Prostate gland (tissue), 2 donors: ENCODE measurements at regions of chr11 and their contacts with region 1.

Region 1: DNA sequence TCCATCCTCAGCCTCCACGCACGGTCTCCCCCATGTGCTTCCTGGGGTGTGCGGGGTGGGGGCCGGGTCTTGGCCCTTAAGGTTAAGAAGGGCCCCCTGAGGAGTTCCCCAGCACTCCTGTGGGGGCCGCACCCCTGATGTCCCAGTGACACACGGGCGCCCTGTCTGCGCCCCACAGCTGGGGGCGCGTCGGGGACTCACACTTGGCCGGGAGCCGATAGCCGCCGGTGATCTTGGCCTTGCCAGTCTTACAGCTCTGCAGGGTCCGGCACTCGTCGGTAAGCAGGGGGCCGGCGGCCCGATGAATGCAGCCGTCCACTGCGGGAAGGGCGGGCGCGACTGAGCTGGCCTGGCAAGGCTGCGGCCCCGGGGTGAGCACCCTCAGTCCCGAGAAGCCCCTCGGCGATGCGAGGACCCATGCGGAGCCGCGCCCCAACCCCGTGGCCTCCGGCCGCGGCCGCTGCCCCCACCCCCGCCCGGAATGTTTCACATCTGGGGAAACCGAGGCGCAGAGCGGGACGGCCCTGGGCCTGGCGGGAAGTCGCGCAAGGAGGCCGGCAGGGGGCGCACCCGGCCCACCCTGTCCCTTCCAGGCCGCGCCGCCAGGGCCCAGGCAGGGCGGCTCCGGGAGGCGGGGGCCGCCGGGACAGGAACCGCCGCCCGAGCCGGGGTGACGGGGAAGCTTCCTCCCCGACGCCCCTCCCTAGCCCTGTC is 13.9 kb downstream of the OTUB1 start:
- DNase-seq: peak; percentile 55
- H3K4me3 ChIP-seq: peak overlapping the region; percentile 20 to 24
- H3K27ac ChIP-seq: peak overlapping the region in 1 of 2 donors; percentile 31
- H3K4me1 ChIP-seq: peaks cover 22% of the 10 kb centered on the region
- H3K27me3 ChIP-seq: no peaks in the 10 kb centered on the region
- CTCF ChIP-seq: peak; percentile 79 to 98 (median 90)
- POLR2A ChIP-seq: no peak

Region 2: GRCh38 chr11:64152841-64153691 is 152.9 kb after region 1 on chr11:
- intact Hi-C with region 1: loop called (anchors 2 kb)
- DNase-seq: peak; percentile 52
- H3K4me3 ChIP-seq: no peak overlapping the region
- H3K27ac ChIP-seq: no peak overlapping the region
- H3K4me1 ChIP-seq: peaks cover 5% of the 10 kb centered on the region
- H3K27me3 ChIP-seq: no peaks in the 10 kb centered on the region
- CTCF ChIP-seq: peak; percentile 94 to 99 (median 97)
- POLR2A ChIP-seq: no peak

Region 3: DNA sequence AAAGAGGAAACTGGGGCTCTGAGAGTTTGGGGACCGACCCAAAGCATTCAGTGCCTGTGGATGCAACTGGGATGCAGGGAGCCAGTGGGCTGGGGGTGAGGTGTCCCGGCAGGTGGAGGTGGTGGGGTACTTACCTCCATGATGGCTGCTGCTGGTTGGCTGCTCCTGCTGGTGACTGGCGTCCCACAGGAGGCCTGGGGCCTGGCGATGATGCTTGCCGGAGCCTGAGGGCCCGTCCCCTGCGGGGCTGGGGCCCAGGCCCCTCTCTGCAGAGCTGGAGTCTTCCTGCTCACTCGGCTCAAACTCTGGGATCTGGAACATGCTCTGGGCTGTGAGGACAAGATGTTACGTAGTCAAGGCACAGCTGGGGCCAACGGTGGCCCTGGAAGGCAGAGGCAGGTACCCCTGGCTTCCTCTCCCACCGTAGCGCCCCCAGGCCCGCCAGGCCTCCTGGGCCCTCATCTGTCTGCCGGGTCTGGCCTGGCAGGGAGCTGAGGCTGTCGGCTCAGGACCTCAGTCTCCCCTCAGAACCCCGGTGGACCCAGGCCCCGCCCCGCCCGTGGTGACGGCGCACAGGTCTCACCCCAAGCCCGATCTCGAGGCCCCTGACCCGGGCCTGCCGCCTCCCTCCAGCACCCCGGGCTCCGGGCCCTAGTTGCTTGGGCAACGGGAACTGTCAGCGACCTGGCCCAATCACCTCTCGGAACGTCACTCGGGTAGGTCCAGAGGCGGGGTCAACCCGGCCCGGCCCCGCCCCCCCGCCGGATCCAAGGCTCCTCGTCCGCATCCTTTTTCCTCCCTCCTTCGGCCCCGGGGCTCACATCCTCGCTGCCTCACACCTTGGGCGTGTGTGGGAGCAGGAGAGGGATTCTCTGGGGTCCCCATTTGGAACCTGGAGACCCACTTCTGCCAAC is 284.1 kb after region 1 on chr11 and contains the start of gene BAD:
- intact Hi-C with region 1: no loop called
- DNase-seq: peak; percentile 97
- H3K4me3 ChIP-seq: peak within 1 kb of the TSS; percentile 71 to 80
- H3K27ac ChIP-seq: peak within 1 kb of the TSS; percentile 97 to 98
- H3K4me1 ChIP-seq: peaks cover 7% of the 10 kb centered on the region
- H3K27me3 ChIP-seq: no peaks in the 10 kb centered on the region
- CTCF ChIP-seq: no peak
- POLR2A ChIP-seq: peak; percentile 74
- total RNA-seq, gene BAD: 140 to 161 TPM

Region 4: GRCh38 chr11:64305075-64305690 is 305.0 kb after region 1 on chr11 and contains the start of gene ESRRA:
- intact Hi-C with region 1: no loop called
- DNase-seq: peak; percentile 100
- H3K4me3 ChIP-seq: peak within 1 kb of the TSS; percentile 53 to 69
- H3K27ac ChIP-seq: peak within 1 kb of the TSS; percentile 78 to 88
- H3K4me1 ChIP-seq: peaks cover 9% of the 10 kb centered on the region
- H3K27me3 ChIP-seq: no peaks in the 10 kb centered on the region
- CTCF ChIP-seq: peak in 2 of 4 experiments; percentile 5 to 23
- POLR2A ChIP-seq: peak; percentile 47
- total RNA-seq, gene ESRRA: 38.7 to 54.7 TPM